MCF 10A (cell line): ENCODE measurements at regions of chr1 and their contacts with region 1.

Region 1: DNA sequence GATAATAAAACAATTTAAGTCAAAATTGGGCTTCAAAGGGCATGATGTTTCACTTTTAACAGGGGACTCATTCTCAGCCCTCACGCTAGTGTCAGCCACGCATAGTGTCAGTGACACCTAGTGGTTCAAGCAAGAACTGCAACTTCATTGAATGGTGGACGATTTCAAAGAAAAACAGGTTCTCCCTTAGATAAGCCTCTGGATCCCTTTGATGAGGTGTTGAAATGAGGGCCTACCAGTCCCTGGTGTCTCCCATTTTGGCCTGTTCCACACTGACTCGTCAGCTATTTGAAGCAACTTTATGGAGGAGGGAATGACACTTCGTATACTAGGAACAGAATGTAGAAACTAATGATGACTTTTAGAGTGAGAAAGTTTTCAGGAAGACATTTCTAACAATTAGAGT is 56.2 kb downstream of the FCRL5 start:
- DNase-seq: peak; percentile 74
- H3K4me3 Mint-ChIP-seq: no peak overlapping the region
- H3K27ac Mint-ChIP-seq: no peak overlapping the region
- H3K4me1 Mint-ChIP-seq: peaks cover 5% of the 10 kb centered on the region
- H3K27me3 Mint-ChIP-seq: peaks cover 90% of the 10 kb centered on the region
- CTCF ChIP-seq: peak; percentile 95

Region 2: DNA sequence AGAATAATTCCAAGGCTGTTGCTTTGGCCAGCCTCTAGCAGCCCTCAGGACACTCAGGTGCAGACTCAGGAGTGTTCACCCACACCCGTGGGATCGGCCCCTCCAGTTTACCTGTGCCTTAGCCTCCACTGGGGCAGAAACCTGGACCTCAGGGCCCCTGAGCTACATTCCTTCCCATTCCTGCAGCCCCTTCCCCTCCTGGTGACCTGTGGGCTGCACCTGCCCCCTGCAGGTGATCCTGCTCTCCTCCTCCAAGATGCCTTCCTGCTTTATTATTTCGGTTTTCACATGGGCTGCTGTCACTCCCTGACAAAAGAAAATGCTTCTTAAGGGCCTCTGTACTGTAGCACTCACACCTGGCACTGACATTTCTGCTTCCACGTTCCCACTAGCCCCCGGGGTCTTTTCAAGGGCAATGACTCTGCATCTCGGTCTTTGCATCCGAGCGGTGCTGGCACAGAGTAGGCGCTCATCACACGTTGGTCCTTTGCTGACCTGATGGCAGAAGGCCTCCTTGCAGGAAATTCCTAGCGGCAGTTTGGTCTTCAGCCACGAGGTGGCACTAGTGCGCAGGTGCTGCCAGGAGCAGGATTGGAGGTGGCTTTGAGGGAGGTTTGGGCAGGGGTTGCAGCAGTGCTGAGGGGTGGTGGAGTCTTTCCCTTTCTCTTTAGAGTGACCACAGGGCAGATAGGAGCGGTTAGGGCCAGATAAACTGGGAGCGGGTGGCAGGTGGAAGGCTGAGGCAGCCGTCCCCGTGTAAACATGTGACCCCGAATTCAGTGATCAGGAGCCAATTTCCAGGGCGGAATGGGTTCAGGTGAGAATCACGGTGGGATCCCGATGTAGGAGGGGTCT is 332.6 kb before region 1 on chr1:
- CTCF ChIA-PET with region 1: interaction called, 32 read pairs
- POLR2A ChIA-PET with region 1: no interaction called
- intact Hi-C with region 1: no loop called
- DNase-seq: peak; percentile 79
- H3K4me3 Mint-ChIP-seq: no peak overlapping the region
- H3K27ac Mint-ChIP-seq: no peak overlapping the region
- H3K4me1 Mint-ChIP-seq: peaks cover 7% of the 10 kb centered on the region
- H3K27me3 Mint-ChIP-seq: peaks cover 24% of the 10 kb centered on the region
- CTCF ChIP-seq: peak; percentile 97

Region 3: DNA sequence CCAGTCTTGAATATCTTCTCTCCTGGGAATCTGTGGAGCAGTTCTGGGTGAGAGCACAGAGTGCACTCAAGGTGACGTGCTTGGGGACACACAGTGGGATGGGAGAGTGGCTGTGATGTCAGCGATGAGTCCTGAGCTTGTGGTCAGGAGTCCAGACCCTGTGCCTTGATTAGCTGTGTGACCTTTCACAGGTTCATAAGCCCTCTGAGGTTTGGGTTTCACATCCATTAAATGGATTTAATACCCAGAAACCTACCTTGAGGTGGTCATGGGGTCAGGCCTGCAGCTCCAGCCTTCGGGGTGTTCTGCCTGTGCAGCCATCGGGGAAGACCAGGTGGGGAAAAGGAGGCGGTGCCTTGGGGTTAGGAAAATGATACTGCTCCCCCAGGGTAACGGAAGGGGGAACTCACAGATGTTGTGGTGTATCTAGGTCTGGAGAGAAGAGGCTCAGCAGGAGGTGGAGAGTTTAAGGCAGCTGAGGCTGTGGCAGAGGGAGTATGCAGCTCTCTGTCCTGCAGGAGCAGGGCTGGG is 319.5 kb before region 1 on chr1:
- CTCF ChIA-PET with region 1: interaction called, 40 read pairs
- POLR2A ChIA-PET with region 1: no interaction called
- intact Hi-C with region 1: no loop called
- DNase-seq: no peak
- H3K4me3 Mint-ChIP-seq: no peak overlapping the region
- H3K27ac Mint-ChIP-seq: no peak overlapping the region
- H3K4me1 Mint-ChIP-seq: no peaks in the 10 kb centered on the region
- H3K27me3 Mint-ChIP-seq: peaks cover 89% of the 10 kb centered on the region
- CTCF ChIP-seq: no peak

Region 4: GRCh38 chr1:157352817-157353408 is 143.2 kb before region 1 on chr1:
- CTCF ChIA-PET with region 1: interaction called, 20 read pairs
- POLR2A ChIA-PET with region 1: no interaction called
- intact Hi-C with region 1: no loop called
- DNase-seq: no peak
- H3K4me3 Mint-ChIP-seq: no peak overlapping the region
- H3K27ac Mint-ChIP-seq: no peak overlapping the region
- H3K4me1 Mint-ChIP-seq: no peaks in the 10 kb centered on the region
- H3K27me3 Mint-ChIP-seq: peaks cover 19% of the 10 kb centered on the region
- CTCF ChIP-seq: no peak

Region 5: GRCh38 chr1:157380523-157380922 is 115.6 kb before region 1 on chr1:
- CTCF ChIA-PET with region 1: interaction called, 64 read pairs
- POLR2A ChIA-PET with region 1: interaction called, 3 read pairs
- intact Hi-C with region 1: no loop called
- DNase-seq: no peak
- H3K4me3 Mint-ChIP-seq: no peak overlapping the region
- H3K27ac Mint-ChIP-seq: no peak overlapping the region
- H3K4me1 Mint-ChIP-seq: peaks cover 6% of the 10 kb centered on the region
- H3K27me3 Mint-ChIP-seq: no peaks in the 10 kb centered on the region
- CTCF ChIP-seq: no peak

Region 6: GRCh38 chr1:157512036-157512969 is 16.2 kb after region 1 on chr1:
- CTCF ChIA-PET with region 1: interaction called, 14 read pairs
- POLR2A ChIA-PET with region 1: no interaction called
- intact Hi-C with region 1: no loop called
- DNase-seq: no peak
- H3K4me3 Mint-ChIP-seq: no peak overlapping the region
- H3K27ac Mint-ChIP-seq: no peak overlapping the region
- H3K4me1 Mint-ChIP-seq: no peaks in the 10 kb centered on the region
- H3K27me3 Mint-ChIP-seq: peaks cover 15% of the 10 kb centered on the region
- CTCF ChIP-seq: no peak

Region 7: DNA sequence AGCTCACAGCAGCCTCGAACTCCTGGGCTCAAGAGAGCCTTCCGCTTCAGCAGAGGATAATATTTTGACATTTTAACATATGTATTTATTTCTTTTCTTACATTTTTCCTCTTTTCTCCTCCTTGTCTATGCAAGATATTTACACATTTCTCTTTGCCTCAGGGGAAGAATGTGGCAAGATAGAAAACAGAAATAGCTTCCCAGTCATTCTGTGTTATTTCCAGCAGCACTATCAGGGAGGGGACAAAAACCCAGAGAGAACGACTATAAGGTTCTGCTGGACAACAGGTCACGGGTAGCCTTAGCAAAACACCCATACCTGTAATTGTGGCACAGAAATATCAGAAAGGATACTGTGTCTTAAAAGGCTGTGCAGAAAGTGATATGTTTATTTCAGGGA is 692.5 kb after region 1 on chr1:
- CTCF ChIA-PET with region 1: no interaction called
- POLR2A ChIA-PET with region 1: no interaction called
- intact Hi-C with region 1: no loop called
- DNase-seq: no peak
- H3K4me3 Mint-ChIP-seq: no peak overlapping the region
- H3K27ac Mint-ChIP-seq: no peak overlapping the region
- H3K4me1 Mint-ChIP-seq: no peaks in the 10 kb centered on the region
- H3K27me3 Mint-ChIP-seq: peaks cover 25% of the 10 kb centered on the region
- CTCF ChIP-seq: no peak